PC-3 (cell line): ENCODE measurements at regions of chr16 and their contacts with region 1.

Region 1: GRCh38 chr16:4097811-4098240 is 18.4 kb downstream of the ADCY9 start:
- DNase-seq: peak; percentile 67
- ATAC-seq: peak; percentile 69
- H3K4me3 ChIP-seq: no peak overlapping the region
- H3K27ac ChIP-seq: no peak overlapping the region
- H3K4me1 ChIP-seq: peaks cover 4% of the 10 kb centered on the region; the same call in 1 of the 2 replicates
- H3K27me3 ChIP-seq: no peaks in the 10 kb centered on the region
- CTCF ChIP-seq: no peak

Region 2: GRCh38 chr16:3950343-3951193 is 147.3 kb before region 1 on chr16:
- CTCF ChIA-PET with region 1: no interaction called
- POLR2A ChIA-PET with region 1: interaction called, 12 read pairs
- intact Hi-C with region 1: no loop called
- DNase-seq: peak; percentile 78
- ATAC-seq: peak; percentile 90
- H3K4me3 ChIP-seq: peak overlapping the region; percentile 52
- H3K27ac ChIP-seq: peak overlapping the region; percentile 25
- H3K4me1 ChIP-seq: peaks cover 17% of the 10 kb centered on the region
- H3K27me3 ChIP-seq: no peaks in the 10 kb centered on the region
- CTCF ChIP-seq: no peak

Region 3: DNA sequence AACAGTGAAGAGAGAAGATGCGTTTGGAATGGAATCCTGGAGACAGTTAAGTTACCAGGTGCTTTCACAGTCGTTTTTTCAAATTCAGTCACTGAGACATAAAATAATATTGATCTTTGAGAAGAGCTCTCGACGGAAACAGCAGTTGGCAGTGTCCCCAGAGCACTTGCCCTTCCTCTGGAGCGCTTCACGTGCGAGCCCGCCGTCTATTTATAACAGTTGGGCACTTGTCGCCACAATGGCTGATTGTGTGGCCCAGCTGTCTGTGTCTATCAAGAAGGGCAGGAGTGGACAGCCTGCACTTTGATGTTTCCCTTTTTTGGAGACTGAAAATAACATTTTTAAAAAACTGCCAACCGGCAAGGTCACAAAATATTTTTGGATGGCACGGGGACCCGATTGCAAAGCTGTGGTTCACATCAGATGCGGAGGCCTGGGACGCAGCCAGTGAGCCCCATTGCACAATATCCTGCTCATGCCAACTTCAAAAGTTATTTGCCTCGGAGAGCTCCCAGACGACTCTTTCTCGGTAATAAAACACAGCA is 44.5 kb before region 1 on chr16:
- CTCF ChIA-PET with region 1: interaction called, 12 read pairs
- POLR2A ChIA-PET with region 1: interaction called, 3 read pairs
- intact Hi-C with region 1: no loop called
- DNase-seq: peak; percentile 39
- ATAC-seq: peak; percentile 54
- H3K4me3 ChIP-seq: peak overlapping the region; percentile 51
- H3K27ac ChIP-seq: no peak overlapping the region
- H3K4me1 ChIP-seq: peaks cover 18% of the 10 kb centered on the region
- H3K27me3 ChIP-seq: no peaks in the 10 kb centered on the region
- CTCF ChIP-seq: no peak

Region 4: DNA sequence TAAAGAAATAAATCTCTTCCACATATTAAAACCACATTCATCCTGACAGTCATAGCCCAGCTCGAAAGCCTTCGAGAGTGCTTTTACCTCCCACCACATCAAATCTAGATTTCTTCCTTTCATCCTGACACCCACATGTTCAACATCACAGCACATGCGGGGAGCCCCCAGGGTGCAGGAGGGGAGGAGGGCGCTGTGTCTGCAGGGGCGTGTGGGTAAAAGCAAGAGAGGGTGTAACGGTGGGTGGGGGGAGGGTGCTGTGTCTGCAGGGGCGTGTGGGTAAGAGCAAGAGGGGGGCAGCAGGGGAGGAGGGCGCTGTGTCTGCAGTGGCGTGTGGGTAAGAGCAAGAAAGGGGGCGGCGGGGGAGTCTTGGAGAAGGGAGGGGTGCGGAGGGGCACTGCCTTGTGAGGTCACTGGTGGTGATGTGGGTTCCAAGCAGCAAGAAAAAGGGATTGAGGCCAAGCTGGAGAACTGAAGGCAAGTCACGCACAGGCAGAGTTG is 16.3 kb before region 1 on chr16:
- CTCF ChIA-PET with region 1: no interaction called
- POLR2A ChIA-PET with region 1: no interaction called
- intact Hi-C with region 1: no loop called
- DNase-seq: no peak
- ATAC-seq: no peak
- H3K4me3 ChIP-seq: no peak overlapping the region
- H3K27ac ChIP-seq: no peak overlapping the region
- H3K4me1 ChIP-seq: no peaks in the 10 kb centered on the region
- H3K27me3 ChIP-seq: no peaks in the 10 kb centered on the region
- CTCF ChIP-seq: no peak

Region 5: DNA sequence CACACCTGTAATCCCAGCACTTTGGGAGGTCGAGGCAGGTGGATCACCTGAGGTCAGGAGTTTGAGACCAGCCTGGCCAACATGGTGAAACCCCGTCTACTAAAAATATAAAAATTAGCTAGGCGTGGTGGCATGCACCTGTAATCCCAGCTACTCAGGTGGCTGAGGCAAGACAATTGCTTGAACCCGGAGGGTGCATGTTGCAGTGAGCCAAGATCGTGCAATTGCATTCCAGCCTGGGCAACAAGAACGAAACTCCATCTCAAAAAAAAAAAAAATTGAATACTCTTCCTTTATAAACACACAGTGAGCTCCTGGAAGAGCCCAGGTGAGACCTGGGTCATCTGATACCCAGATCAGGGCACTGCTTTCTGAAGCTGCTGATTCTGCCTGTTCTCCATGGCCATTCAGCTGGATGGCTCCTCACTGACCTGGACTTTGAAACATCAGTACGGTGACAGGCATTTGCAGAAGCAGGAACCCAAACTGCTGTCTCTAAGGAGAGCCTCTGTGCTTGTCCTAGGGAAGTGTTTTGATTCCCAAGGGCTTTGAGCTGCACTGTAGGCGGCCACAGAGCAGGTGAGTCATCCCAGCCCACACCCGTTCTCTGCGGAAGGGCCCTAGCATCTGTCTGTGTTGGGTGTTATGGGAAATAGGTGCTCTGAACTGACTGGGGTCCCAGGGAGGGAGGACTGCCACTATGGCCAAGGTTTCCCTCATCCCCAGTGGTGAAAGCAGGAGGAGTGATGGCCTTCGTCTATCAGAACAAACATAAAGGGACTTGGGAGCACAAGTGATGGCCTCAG is 79.0 kb after region 1 on chr16:
- CTCF ChIA-PET with region 1: no interaction called
- POLR2A ChIA-PET with region 1: no interaction called
- intact Hi-C with region 1: no loop called
- DNase-seq: peak; percentile 54
- ATAC-seq: peak; percentile 99
- H3K4me3 ChIP-seq: no peak overlapping the region
- H3K27ac ChIP-seq: no peak overlapping the region
- H3K4me1 ChIP-seq: peaks cover 9% of the 10 kb centered on the region
- H3K27me3 ChIP-seq: no peaks in the 10 kb centered on the region
- CTCF ChIP-seq: no peak

Region 6: GRCh38 chr16:4298761-4299522 is 201.1 kb after region 1 on chr16:
- CTCF ChIA-PET with region 1: no interaction called
- POLR2A ChIA-PET with region 1: no interaction called
- intact Hi-C with region 1: no loop called
- DNase-seq: peak; percentile 89
- ATAC-seq: peak; percentile 98
- H3K4me3 ChIP-seq: peak overlapping the region; percentile 47; the same call in 1 of the 2 replicates
- H3K27ac ChIP-seq: peak overlapping the region; percentile 86
- H3K4me1 ChIP-seq: peaks cover 18% of the 10 kb centered on the region
- H3K27me3 ChIP-seq: no peaks in the 10 kb centered on the region
- CTCF ChIP-seq: no peak